Activated CD4-positive, alpha-beta memory T cell treated with anti-CD3 and anti-CD28 coated beads for 36 hours (primary cell): ENCODE measurements at regions of chr12 and their contacts with region 1.

Region 1: DNA sequence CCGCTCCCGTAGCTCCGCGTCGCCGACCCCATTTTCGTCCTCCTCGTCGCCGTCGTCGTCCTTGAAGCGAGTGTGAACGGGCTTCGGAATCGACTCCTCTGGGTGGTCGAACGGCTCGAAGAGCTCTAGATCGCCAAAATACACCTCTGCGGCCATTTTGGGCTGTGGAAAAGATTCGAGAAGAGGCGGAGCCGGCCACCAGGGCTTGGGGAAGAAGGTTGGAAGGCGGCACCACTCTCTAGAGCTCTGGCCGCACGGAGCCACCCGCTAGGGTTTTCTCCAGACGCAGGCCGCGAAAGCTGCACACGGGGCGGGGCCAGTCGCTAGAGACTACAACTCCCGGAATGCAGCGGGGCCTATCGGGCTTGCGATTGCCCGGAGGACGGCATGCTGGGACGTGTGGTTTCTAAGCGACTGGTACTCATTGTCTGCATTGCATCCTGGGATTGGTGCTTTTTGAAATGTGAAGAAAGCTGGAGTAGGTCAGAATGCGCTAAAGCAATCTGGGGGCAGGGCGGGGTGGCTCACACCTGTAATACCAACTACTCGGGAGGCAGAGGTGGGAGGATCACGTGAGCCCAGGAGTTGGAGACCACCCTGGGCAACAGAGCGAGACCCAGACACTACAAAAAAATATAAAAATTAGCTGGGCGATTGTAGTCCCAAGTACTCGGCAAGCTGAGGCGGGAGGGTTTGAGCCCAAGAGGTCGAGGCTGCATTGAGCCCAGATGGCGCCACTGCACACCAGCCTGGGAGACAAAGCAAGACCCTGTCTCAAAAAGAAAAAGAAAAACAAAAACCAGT is at the start of gene ZCCHC8:
- DNase-seq: peak; percentile 98
- H3K4me3 Mint-ChIP-seq: peak within 1 kb of the TSS; percentile 98
- H3K27ac Mint-ChIP-seq: peak within 1 kb of the TSS; percentile 99
- H3K4me1 Mint-ChIP-seq: peaks cover 33% of the 10 kb centered on the region
- H3K27me3 Mint-ChIP-seq: no peaks in the 10 kb centered on the region
- total RNA-seq, gene ZCCHC8: 27.7 to 28.5 TPM

Region 2: DNA sequence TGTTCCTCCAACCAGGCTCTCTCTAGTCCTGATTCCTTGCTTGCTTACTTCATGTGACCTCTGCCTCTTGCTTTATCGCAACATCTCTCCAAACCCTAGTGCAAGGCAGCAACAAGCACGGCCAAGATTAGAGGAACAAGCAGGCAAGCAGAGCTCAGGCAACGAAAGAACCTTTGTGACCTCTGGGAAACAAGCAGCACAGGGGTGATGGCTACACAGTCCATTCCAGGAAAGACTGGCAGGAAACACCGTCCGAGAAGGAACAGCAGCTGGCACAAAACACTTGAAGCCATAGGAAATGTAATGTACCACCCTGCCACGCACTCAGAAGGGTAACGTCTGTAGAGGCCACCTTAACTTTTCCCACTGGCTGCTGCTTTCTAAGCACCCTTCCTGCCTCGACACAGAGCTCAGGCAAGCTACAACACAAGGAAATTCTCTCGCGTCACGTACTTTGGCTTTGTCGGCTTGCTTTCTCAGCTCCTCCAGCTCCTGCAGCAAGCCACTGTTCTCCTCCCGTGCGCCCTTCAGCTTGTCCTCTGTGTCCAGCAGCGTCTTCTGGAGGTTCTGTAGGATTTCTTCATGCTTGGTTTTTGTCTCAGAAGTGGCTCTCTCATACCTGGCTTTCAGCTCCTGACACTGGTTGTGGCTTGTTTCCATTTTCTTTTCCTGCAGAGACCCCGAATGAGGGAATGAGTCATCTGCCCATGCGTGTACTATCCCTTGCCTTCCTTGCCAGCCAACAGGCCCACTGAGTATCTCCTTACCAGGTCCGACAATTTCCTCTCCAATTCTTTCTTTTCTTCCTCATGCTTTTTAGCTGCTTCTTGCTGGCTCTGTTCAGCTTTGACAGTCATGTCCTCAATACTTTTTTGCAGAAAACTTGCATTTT is 173.1 kb before region 1 on chr12:
- CTCF ChIA-PET with region 1: no interaction called
- POLR2A ChIA-PET with region 1: no interaction called
- intact Hi-C with region 1: no loop called
- DNase-seq: no peak
- H3K4me3 Mint-ChIP-seq: no peak overlapping the region
- H3K27ac Mint-ChIP-seq: peak overlapping the region; percentile 40
- H3K4me1 Mint-ChIP-seq: peaks cover 22% of the 10 kb centered on the region
- H3K27me3 Mint-ChIP-seq: no peaks in the 10 kb centered on the region

Region 3: DNA sequence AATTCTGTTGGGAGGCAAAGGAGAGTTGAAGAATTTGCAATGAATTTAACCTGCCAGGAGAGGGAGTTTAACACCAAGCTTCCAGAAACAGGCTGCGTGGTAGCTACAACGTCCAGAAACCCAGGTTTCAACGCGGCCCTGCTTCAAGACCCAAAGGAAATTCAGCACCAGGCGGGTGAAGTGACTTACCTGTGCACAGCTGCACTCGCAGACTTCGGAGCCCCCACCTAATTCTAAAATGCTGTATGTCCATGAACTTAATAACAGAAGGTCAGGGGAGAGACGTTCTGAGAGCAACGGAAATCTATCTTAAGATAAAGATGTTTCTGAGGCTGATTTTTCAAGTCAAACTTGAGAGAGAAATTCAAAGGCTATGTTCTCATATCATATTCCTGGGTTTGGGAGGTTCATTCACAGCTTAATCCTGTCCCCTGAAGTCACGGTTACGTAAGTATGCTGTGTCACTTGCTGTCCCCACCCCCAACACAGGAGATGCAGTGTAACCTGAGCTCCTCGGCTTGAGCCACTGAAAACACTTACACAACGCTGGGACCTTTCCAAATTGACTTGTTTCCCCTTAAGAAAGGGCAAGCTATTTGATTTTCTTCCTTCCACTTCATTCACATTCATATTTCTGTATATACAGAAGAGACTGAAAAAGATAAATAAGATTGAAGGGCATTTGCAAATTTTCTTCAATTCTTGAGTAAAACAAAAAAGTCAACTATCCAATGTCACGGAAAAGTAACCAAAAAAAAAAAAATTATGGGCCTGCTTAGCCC is 101.1 kb before region 1 on chr12:
- CTCF ChIA-PET with region 1: interaction called, 55 read pairs
- POLR2A ChIA-PET with region 1: interaction called, 18 read pairs
- intact Hi-C with region 1: loop called (anchors 1 kb)
- DNase-seq: peak; percentile 67
- H3K4me3 Mint-ChIP-seq: peak overlapping the region; percentile 27
- H3K27ac Mint-ChIP-seq: peak overlapping the region; percentile 77
- H3K4me1 Mint-ChIP-seq: peaks cover 48% of the 10 kb centered on the region
- H3K27me3 Mint-ChIP-seq: no peaks in the 10 kb centered on the region

Region 4: DNA sequence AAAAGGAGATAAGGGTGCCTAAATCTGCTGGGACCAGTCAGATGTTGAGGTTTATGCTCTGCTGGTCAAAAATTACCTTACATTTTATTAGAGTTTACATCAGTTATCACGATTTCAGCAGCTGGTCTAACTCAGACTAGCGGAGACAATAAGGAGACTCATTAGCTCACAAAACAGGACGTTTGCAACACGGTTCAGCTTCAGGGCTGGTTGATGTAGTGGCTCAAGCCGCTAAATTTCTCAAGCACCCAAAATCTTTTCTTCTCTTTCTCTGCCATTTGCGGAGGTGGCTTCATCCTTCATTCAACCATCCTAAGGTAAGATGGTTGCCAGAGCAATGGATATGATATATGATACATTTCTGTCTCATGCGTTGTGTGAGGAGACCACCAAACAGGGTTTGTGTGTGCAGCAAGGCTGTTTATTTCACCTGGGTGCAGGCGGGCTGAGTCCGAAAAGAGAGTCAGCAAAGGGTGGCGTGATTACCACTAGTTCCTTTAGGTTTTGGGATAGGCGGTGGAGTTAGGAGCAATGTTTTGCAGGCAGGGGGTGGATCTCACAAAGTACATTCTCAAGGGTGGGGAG is 48.1 kb before region 1 on chr12:
- CTCF ChIA-PET with region 1: no interaction called
- POLR2A ChIA-PET with region 1: interaction called, 4 read pairs
- intact Hi-C with region 1: loop called (anchors 2 kb)
- DNase-seq: peak; percentile 23
- H3K4me3 Mint-ChIP-seq: peak overlapping the region; percentile 70
- H3K27ac Mint-ChIP-seq: peak overlapping the region; percentile 92
- H3K4me1 Mint-ChIP-seq: peaks cover 29% of the 10 kb centered on the region
- H3K27me3 Mint-ChIP-seq: no peaks in the 10 kb centered on the region

Region 5: GRCh38 chr12:122517877-122518276 is 17.0 kb after region 1 on chr12:
- CTCF ChIA-PET with region 1: interaction called, 5 read pairs
- POLR2A ChIA-PET with region 1: interaction called, 215 read pairs
- intact Hi-C with region 1: no loop called
- DNase-seq: no peak
- H3K4me3 Mint-ChIP-seq: no peak overlapping the region
- H3K27ac Mint-ChIP-seq: peak overlapping the region; percentile 2
- H3K4me1 Mint-ChIP-seq: peaks cover 49% of the 10 kb centered on the region
- H3K27me3 Mint-ChIP-seq: no peaks in the 10 kb centered on the region

Region 6: DNA sequence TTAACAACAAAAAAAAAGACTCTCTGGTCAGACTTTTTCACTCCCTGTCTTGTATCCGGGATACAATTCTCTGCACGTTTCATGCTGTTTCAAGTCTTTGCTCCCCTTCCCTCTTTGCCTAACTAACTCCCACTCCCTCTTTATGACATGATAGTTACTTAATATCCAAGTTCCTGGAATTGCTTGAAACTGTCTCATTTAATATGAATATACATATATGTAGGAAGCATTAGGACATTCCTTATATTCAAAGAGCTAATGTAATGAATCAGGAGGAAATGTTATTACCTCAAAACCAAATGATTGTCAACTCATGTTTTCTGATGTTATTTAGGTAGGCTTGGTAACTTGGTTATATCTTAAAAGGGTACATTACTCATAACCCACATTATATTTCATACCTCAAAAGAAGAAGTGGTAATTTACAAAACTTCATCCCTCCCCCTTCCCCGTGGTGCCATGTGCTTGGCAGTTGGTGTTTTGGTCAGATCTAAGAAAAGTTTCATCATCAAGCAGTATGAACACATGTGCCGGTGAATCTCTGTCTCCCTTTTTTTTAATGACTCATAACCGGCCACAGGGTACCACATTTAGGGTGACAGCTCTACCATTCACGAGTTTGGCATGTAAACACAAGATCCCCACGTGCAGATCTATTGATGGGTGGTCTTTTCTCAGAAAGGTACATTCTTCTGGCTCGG is 145.8 kb after region 1 on chr12:
- CTCF ChIA-PET with region 1: no interaction called
- POLR2A ChIA-PET with region 1: interaction called, 4 read pairs
- intact Hi-C with region 1: loop called (anchors 1 kb)
- DNase-seq: peak; percentile 80
- H3K4me3 Mint-ChIP-seq: peak overlapping the region; percentile 47
- H3K27ac Mint-ChIP-seq: peak overlapping the region; percentile 14
- H3K4me1 Mint-ChIP-seq: peaks cover 14% of the 10 kb centered on the region
- H3K27me3 Mint-ChIP-seq: no peaks in the 10 kb centered on the region